Left cardiac atrium (tissue), 4 donors: ENCODE measurements at regions of chr10 and their contacts with region 1.

Region 1: GRCh38 chr10:46106410-46107255 is 60.6 kb upstream of the MSMB start:
- DNase-seq: peak; percentile 71
- ATAC-seq: peak; percentile 99

Region 2: GRCh38 chr10:46001187-46001756 is 105.4 kb before region 1 on chr10:
- intact Hi-C with region 1: no loop called
- DNase-seq: no peak
- ATAC-seq: no peak

Region 3: GRCh38 chr10:46268076-46268881 is 161.6 kb after region 1 on chr10:
- intact Hi-C with region 1: no loop called
- DNase-seq: no peak
- ATAC-seq: peak in 1 of 2 donors; percentile 36

Region 4: GRCh38 chr10:46284293-46285229 is 177.9 kb after region 1 on chr10:
- intact Hi-C with region 1: loop called in 1 of 2 experiments (anchors 5 kb)
- DNase-seq: peak; percentile 88
- ATAC-seq: peak; percentile 92 to 95